ENCODE measurements at regions of chr3 and their contacts with region 1.

Region 1: GRCh38 chr3:112873632-112874031 is 27.0 kb upstream of the CD200R1L start:
- DNase-seq: no peak
- ATAC-seq: peak; percentile 79
- H3K4me3 Mint-ChIP-seq: peak overlapping the region; percentile 75
- H3K27ac Mint-ChIP-seq: peak overlapping the region; percentile 80
- H3K4me1 Mint-ChIP-seq: peaks cover 43% of the 10 kb centered on the region
- H3K27me3 Mint-ChIP-seq: no peaks in the 10 kb centered on the region
- CTCF ChIP-seq: no peak

Region 2: GRCh38 chr3:112175646-112176045 is 698.0 kb before region 1 on chr3:
- CTCF ChIA-PET with region 1: no interaction called
- POLR2A ChIA-PET with region 1: no interaction called
- intact Hi-C with region 1: no loop called
- DNase-seq: no peak
- ATAC-seq: no peak
- H3K4me3 Mint-ChIP-seq: no peak overlapping the region
- H3K27ac Mint-ChIP-seq: no peak overlapping the region
- H3K4me1 Mint-ChIP-seq: peaks cover 7% of the 10 kb centered on the region
- H3K27me3 Mint-ChIP-seq: no peaks in the 10 kb centered on the region
- CTCF ChIP-seq: no peak

Region 3: GRCh38 chr3:112751564-112752512 is 121.8 kb before region 1 on chr3:
- CTCF ChIA-PET with region 1: no interaction called
- POLR2A ChIA-PET with region 1: no interaction called
- intact Hi-C with region 1: no loop called
- DNase-seq: no peak
- ATAC-seq: no peak
- H3K4me3 Mint-ChIP-seq: no peak overlapping the region
- H3K27ac Mint-ChIP-seq: no peak overlapping the region
- H3K4me1 Mint-ChIP-seq: peaks cover 9% of the 10 kb centered on the region
- H3K27me3 Mint-ChIP-seq: no peaks in the 10 kb centered on the region
- CTCF ChIP-seq: no peak

Region 4: GRCh38 chr3:112888381-112889085 is 14.9 kb after region 1 on chr3:
- CTCF ChIA-PET with region 1: no interaction called
- POLR2A ChIA-PET with region 1: no interaction called
- intact Hi-C with region 1: loop called (anchors 1 kb)
- DNase-seq: no peak
- ATAC-seq: no peak
- H3K4me3 Mint-ChIP-seq: peak overlapping the region; percentile 12
- H3K27ac Mint-ChIP-seq: no peak overlapping the region
- H3K4me1 Mint-ChIP-seq: peaks cover 25% of the 10 kb centered on the region
- H3K27me3 Mint-ChIP-seq: no peaks in the 10 kb centered on the region
- CTCF ChIP-seq: no peak

Region 5: GRCh38 chr3:112973325-112974177 is 99.9 kb after region 1 on chr3:
- CTCF ChIA-PET with region 1: no interaction called
- POLR2A ChIA-PET with region 1: no interaction called
- intact Hi-C with region 1: loop called (anchors 5 kb)
- DNase-seq: no peak
- ATAC-seq: peak; percentile 75
- H3K4me3 Mint-ChIP-seq: peak overlapping the region; percentile 84
- H3K27ac Mint-ChIP-seq: peak overlapping the region; percentile 76
- H3K4me1 Mint-ChIP-seq: peaks cover 80% of the 10 kb centered on the region
- H3K27me3 Mint-ChIP-seq: no peaks in the 10 kb centered on the region
- CTCF ChIP-seq: no peak

Measured in activated B cell treated with CpG ODN at 0.5 μM for 24 hours (primary cell).